Esophagus muscularis mucosa (tissue), 4 donors: ENCODE measurements at regions of chr15 and their contacts with region 1.

Region 1: GRCh38 chr15:93030430-93031105 is 58.4 kb downstream of the RGMA start:
- DNase-seq: no peak
- H3K4me3 ChIP-seq: peak overlapping the region in 1 of 4 donors; percentile 28
- H3K27ac ChIP-seq: peak overlapping the region; percentile 84 to 91 (median 89)
- H3K4me1 ChIP-seq: peaks cover 48 to 57% (median 57%) of the 10 kb centered on the region in 4 donors
- H3K27me3 ChIP-seq: peaks cover 0 to 5% (median 0%) of the 10 kb centered on the region in 4 donors
- CTCF ChIP-seq: peak; percentile 88 to 96 (median 94)
- EP300 ChIP-seq: no peak
- POLR2A ChIP-seq: no peak

Region 2: GRCh38 chr15:92797168-92797951 is 233.2 kb before region 1 on chr15:
- intact Hi-C with region 1: loop called (anchors 5 kb)
- DNase-seq: no peak
- H3K4me3 ChIP-seq: no peak overlapping the region
- H3K27ac ChIP-seq: peak overlapping the region; percentile 57 to 65 (median 64)
- H3K4me1 ChIP-seq: peaks cover 3 to 25% (median 23%) of the 10 kb centered on the region in 4 donors
- H3K27me3 ChIP-seq: no peaks in the 10 kb centered on the region
- CTCF ChIP-seq: peak; percentile 74 to 81 (median 76)
- EP300 ChIP-seq: no peak
- POLR2A ChIP-seq: no peak